Activated T-helper 2 cell treated with anti-CD3 and anti-CD28 coated beads, Interferon-gamma antibody, Interleukin-2, Interleukin-4, amounts not matched to agents 10 μg/mL and 5 μg/mL and 100 μg/mL, durations not matched to agents 14 hours and 24 hours and 36 hours (primary cell): ENCODE measurements at regions of chr20 and their contacts with region 1.

Region 1: DNA sequence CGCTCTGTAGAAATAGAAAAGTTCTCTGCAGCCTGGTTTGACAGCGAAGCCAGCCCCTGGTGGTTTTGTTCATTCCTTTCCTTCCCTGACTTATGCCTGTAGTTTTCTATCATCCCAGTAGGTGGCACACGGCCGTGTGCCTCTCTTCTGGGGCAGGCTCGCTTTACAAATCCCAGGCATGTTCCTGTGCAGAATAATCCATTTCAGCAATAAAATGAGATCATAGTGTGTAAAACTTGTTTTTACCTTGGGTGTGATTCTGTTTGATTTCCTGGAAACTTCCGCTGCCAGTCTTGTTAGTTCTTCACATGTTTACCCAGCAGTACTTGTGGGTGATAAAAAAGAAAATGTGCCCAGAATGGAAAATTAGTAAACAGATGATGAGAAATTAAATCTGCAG is 7.4 kb upstream of the INSM1 start:
- DNase-seq: no peak
- H3K4me3 Mint-ChIP-seq: no peak overlapping the region
- H3K27ac Mint-ChIP-seq: no peak overlapping the region
- H3K4me1 Mint-ChIP-seq: peaks cover 22% of the 10 kb centered on the region
- H3K27me3 Mint-ChIP-seq: peaks cover 47% of the 10 kb centered on the region

Region 2: DNA sequence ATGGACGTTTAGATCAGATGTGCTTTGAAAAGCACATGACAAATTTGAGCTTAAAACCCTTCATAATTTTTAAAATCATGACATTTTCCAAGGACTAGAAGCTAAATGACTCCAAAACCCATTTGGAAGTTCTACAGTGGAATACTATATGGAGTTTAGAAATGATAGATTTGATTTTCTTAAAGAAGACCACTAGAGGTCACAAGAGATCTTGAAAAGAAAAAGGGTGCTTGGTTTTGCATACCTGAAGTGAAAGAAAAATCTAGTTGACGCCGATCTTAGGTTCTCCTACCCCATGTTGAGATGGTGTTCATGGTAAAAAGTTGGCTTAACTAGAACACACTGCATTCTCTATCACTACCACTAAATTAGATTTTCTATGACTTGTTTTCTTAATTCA is 276.7 kb before region 1 on chr20:
- intact Hi-C with region 1: loop called (anchors 10 kb)
- DNase-seq: no peak
- H3K4me3 Mint-ChIP-seq: no peak overlapping the region
- H3K27ac Mint-ChIP-seq: no peak overlapping the region
- H3K4me1 Mint-ChIP-seq: peaks cover 2% of the 10 kb centered on the region
- H3K27me3 Mint-ChIP-seq: peaks cover 9% of the 10 kb centered on the region

Region 3: GRCh38 chr20:20435453-20435852 is 75.0 kb after region 1 on chr20:
- intact Hi-C with region 1: no loop called
- DNase-seq: no peak
- H3K4me3 Mint-ChIP-seq: no peak overlapping the region
- H3K27ac Mint-ChIP-seq: no peak overlapping the region
- H3K4me1 Mint-ChIP-seq: peaks cover 6% of the 10 kb centered on the region
- H3K27me3 Mint-ChIP-seq: no peaks in the 10 kb centered on the region

Region 4: GRCh38 chr20:20498076-20498861 is 137.8 kb after region 1 on chr20:
- intact Hi-C with region 1: loop called (anchors 2 kb)
- DNase-seq: no peak
- H3K4me3 Mint-ChIP-seq: no peak overlapping the region
- H3K27ac Mint-ChIP-seq: peak overlapping the region; percentile 82
- H3K4me1 Mint-ChIP-seq: peaks cover 66% of the 10 kb centered on the region
- H3K27me3 Mint-ChIP-seq: no peaks in the 10 kb centered on the region

Region 5: DNA sequence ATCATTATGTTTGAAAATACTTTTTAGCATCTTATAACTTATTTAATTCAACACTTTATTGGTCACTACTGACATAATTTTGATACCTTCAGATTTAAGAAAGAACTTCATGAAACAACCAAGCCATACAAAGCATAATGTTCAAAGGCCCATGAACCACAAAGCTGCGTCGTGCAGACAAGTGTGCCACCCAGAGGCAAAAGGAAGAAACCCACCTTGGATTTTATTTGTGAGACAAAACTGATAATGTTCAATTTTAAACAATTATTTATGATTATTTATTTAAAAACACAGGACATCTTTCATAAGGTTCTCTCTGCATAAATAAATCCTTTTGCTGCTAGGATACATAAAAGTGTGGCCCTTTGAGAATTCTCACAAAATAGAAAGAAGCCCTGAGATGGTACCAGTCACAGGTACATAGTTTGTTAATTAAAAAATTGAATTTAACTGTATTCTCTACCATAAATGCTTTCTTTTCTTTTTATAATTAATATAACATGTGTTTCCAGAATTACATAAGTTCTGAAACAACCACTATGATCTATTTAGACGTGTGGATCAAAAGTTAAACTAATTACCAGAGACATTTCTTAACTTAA is 208.2 kb after region 1 on chr20:
- intact Hi-C with region 1: loop called (anchors 1 kb)
- DNase-seq: no peak
- H3K4me3 Mint-ChIP-seq: no peak overlapping the region
- H3K27ac Mint-ChIP-seq: no peak overlapping the region
- H3K4me1 Mint-ChIP-seq: peaks cover 7% of the 10 kb centered on the region
- H3K27me3 Mint-ChIP-seq: no peaks in the 10 kb centered on the region

Region 6: GRCh38 chr20:20593447-20594170 is 233.1 kb after region 1 on chr20:
- intact Hi-C with region 1: loop called (anchors 5 kb)
- DNase-seq: no peak
- H3K4me3 Mint-ChIP-seq: no peak overlapping the region
- H3K27ac Mint-ChIP-seq: no peak overlapping the region
- H3K4me1 Mint-ChIP-seq: peaks cover 2% of the 10 kb centered on the region
- H3K27me3 Mint-ChIP-seq: no peaks in the 10 kb centered on the region

Region 7: GRCh38 chr20:21395666-21396598 is 1035.5 kb after region 1 on chr20:
- intact Hi-C with region 1: loop called (anchors 10 kb)
- DNase-seq: peak; percentile 24
- H3K4me3 Mint-ChIP-seq: peak overlapping the region; percentile 56
- H3K27ac Mint-ChIP-seq: peak overlapping the region; percentile 46
- H3K4me1 Mint-ChIP-seq: peaks cover 20% of the 10 kb centered on the region
- H3K27me3 Mint-ChIP-seq: peaks cover 74% of the 10 kb centered on the region

Region 8: GRCh38 chr20:21702553-21703470 is 1342.3 kb after region 1 on chr20:
- intact Hi-C with region 1: loop called (anchors 5 kb)
- DNase-seq: peak; percentile 19
- H3K4me3 Mint-ChIP-seq: no peak overlapping the region
- H3K27ac Mint-ChIP-seq: no peak overlapping the region
- H3K4me1 Mint-ChIP-seq: no peaks in the 10 kb centered on the region
- H3K27me3 Mint-ChIP-seq: peaks cover 87% of the 10 kb centered on the region